Naive thymus-derived CD4-positive, alpha-beta T cell (primary cell): ENCODE measurements at regions of chr1 and their contacts with region 1.

Region 1: GRCh38 chr1:110872745-110873720 is at the start of gene CD53:
- DNase-seq: peak in 8 of 9 donors; percentile 19 to 82 (median 76)
- ATAC-seq: peak; percentile 86
- H3K4me3 ChIP-seq: peak within 1 kb of the TSS; percentile 84
- H3K4me3 Mint-ChIP-seq: peak within 1 kb of the TSS; percentile 94 to 100 (median 96)
- H3K27ac ChIP-seq: peak within 1 kb of the TSS; percentile 91
- H3K27ac Mint-ChIP-seq: peak within 1 kb of the TSS; percentile 95 to 99 (median 98)
- H3K4me1 ChIP-seq: peaks cover 24 to 48% of the 10 kb centered on the region in 2 donors
- H3K4me1 Mint-ChIP-seq: peaks cover 34 to 72% (median 52%) of the 10 kb centered on the region in 7 donors
- H3K27me3 ChIP-seq: no peaks in the 10 kb centered on the region
- H3K27me3 Mint-ChIP-seq: no peaks in the 10 kb centered on the region
- total RNA-seq, gene CD53: 237 to 513 (median 287) TPM

Region 2: GRCh38 chr1:110657351-110657750 is 215.7 kb before region 1 on chr1:
- CTCF ChIA-PET with region 1: no interaction called
- POLR2A ChIA-PET with region 1: no interaction called
- intact Hi-C with region 1: no loop called
- DNase-seq: no peak
- ATAC-seq: no peak
- H3K4me3 ChIP-seq: no peak overlapping the region
- H3K4me3 Mint-ChIP-seq: no peak overlapping the region
- H3K27ac ChIP-seq: no peak overlapping the region
- H3K27ac Mint-ChIP-seq: peak overlapping the region in 8 of 9 donors; percentile 14 to 90 (median 63)
- H3K4me1 ChIP-seq: peaks cover 4 to 13% of the 10 kb centered on the region in 2 donors
- H3K4me1 Mint-ChIP-seq: peaks cover 16 to 63% (median 47%) of the 10 kb centered on the region in 7 donors
- H3K27me3 ChIP-seq: no peaks in the 10 kb centered on the region
- H3K27me3 Mint-ChIP-seq: no peaks in the 10 kb centered on the region

Region 3: GRCh38 chr1:110780600-110781484 is 92.2 kb before region 1 on chr1:
- CTCF ChIA-PET with region 1: interaction called, 7 read pairs
- POLR2A ChIA-PET with region 1: interaction called, 36 read pairs
- intact Hi-C with region 1: loop called in 1 of 2 experiments (anchors 1 kb)
- DNase-seq: peak; percentile 48 to 83 (median 74)
- ATAC-seq: peak; percentile 88
- H3K4me3 ChIP-seq: no peak overlapping the region
- H3K4me3 Mint-ChIP-seq: peak overlapping the region in 5 of 10 donors; percentile 29 to 61 (median 42)
- H3K27ac ChIP-seq: no peak overlapping the region
- H3K27ac Mint-ChIP-seq: peak overlapping the region in 5 of 9 donors; percentile 2 to 82 (median 34)
- H3K4me1 ChIP-seq: peaks cover 31 to 40% of the 10 kb centered on the region in 2 donors
- H3K4me1 Mint-ChIP-seq: peaks cover 18 to 54% (median 45%) of the 10 kb centered on the region in 7 donors
- H3K27me3 ChIP-seq: no peaks in the 10 kb centered on the region
- H3K27me3 Mint-ChIP-seq: peaks cover 0 to 28% (median 0%) of the 10 kb centered on the region in 5 donors

Region 4: DNA sequence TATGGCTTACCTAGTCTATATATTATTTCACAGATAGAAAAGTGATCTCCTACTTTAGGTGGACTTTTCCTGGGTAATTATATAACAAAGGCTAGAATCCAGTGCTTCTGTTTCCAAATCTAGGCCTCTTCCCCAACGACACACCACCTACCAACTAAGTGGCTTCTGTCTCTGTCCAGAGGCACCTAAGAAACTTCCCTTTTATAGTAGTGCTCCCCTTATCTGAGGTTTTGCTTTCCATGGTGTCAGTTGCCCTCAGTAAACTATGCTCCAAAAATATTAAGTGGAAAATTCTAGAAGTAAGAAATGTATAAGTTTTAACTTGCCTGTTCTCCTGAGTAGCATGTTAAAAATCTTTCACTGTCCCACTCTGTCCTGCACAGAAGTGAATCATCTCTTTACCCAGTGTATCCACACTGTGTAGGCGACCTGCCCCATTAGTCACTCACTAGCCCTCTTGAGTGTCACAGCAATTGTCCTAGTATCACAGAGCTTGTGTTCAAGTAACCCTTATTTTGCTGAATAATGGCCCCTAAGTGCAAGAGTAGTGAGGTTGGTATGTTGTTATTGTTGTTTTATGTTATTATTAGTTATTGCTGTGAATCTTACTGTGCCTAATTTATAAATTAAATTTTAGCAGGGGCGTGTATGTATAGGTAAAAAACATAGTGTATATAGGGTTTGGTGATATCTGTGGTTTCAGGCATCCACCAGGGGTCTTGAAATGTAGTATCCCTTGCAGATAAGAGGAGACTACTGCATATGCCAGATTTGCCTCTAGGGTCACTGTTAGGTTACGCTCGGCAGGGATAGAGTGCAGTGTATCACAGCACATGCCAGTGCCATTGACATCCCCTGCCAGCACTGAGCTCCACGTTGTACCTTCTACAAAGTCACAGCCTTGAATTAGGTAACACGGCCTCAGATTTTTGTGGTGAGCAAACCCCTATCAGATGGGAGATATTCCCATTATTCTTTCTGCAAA is 14.8 kb before region 1 on chr1:
- CTCF ChIA-PET with region 1: interaction called, 4 read pairs
- POLR2A ChIA-PET with region 1: interaction called, 9 read pairs
- intact Hi-C with region 1: loop called in 1 of 2 experiments (anchors 2 kb)
- DNase-seq: no peak
- ATAC-seq: peak; percentile 51
- H3K4me3 ChIP-seq: no peak overlapping the region
- H3K4me3 Mint-ChIP-seq: no peak overlapping the region
- H3K27ac ChIP-seq: no peak overlapping the region
- H3K27ac Mint-ChIP-seq: no peak overlapping the region
- H3K4me1 ChIP-seq: no peaks in the 10 kb centered on the region
- H3K4me1 Mint-ChIP-seq: peaks cover 3 to 38% (median 14%) of the 10 kb centered on the region in 7 donors
- H3K27me3 ChIP-seq: no peaks in the 10 kb centered on the region
- H3K27me3 Mint-ChIP-seq: peaks cover 0 to 18% (median 5%) of the 10 kb centered on the region in 5 donors

Region 5: GRCh38 chr1:110903853-110904484 is 30.9 kb after region 1 on chr1:
- CTCF ChIA-PET with region 1: interaction called, 3 read pairs
- POLR2A ChIA-PET with region 1: interaction called, 15 read pairs
- intact Hi-C with region 1: no loop called
- DNase-seq: no peak
- ATAC-seq: peak; percentile 48
- H3K4me3 ChIP-seq: no peak overlapping the region
- H3K4me3 Mint-ChIP-seq: no peak overlapping the region
- H3K27ac ChIP-seq: peak overlapping the region; percentile 4
- H3K27ac Mint-ChIP-seq: peak overlapping the region in 8 of 9 donors; percentile 42 to 80 (median 68)
- H3K4me1 ChIP-seq: peaks cover 0 to 2% of the 10 kb centered on the region in 2 donors
- H3K4me1 Mint-ChIP-seq: peaks cover 9 to 47% (median 33%) of the 10 kb centered on the region in 7 donors
- H3K27me3 ChIP-seq: no peaks in the 10 kb centered on the region
- H3K27me3 Mint-ChIP-seq: no peaks in the 10 kb centered on the region

Region 6: DNA sequence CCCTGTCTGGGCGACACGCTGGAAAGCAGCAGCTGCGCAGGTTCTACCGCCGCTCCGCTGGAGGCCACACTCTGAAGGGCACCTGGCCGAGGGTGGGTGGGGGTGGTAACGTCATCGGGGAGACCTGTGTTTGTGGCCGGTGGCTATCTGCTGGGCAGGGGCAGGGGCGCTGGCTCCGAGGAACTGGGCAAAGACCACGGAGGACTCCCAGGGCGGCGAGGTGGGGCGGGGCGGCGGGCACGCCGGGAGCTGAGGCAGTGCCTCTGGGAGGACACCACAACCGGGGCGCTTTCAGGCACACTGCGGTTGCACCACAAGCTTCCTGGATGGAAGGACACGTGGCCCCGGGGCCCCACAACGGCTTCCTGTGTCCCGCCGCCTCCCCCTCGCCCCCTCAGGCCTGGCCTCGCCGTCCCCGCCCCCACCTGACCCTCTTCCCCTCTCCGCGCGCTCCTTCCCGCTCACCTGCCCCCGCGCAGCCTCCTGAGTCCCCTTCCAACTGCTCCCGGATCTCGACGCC is 330.7 kb after region 1 on chr1:
- CTCF ChIA-PET with region 1: no interaction called
- POLR2A ChIA-PET with region 1: interaction called, 3 read pairs
- intact Hi-C with region 1: loop called in 1 of 2 experiments (anchors 5 kb)
- DNase-seq: peak; percentile 51 to 86 (median 82)
- ATAC-seq: peak; percentile 71
- H3K4me3 ChIP-seq: peak overlapping the region; percentile 84
- H3K4me3 Mint-ChIP-seq: peak overlapping the region; percentile 90 to 100 (median 99)
- H3K27ac ChIP-seq: peak overlapping the region; percentile 90
- H3K27ac Mint-ChIP-seq: peak overlapping the region; percentile 80 to 99 (median 96)
- H3K4me1 ChIP-seq: peaks cover 30 to 32% of the 10 kb centered on the region in 2 donors
- H3K4me1 Mint-ChIP-seq: peaks cover 32 to 76% (median 61%) of the 10 kb centered on the region in 7 donors
- H3K27me3 ChIP-seq: no peaks in the 10 kb centered on the region
- H3K27me3 Mint-ChIP-seq: no peaks in the 10 kb centered on the region